MCF 10A (cell line): ENCODE measurements at regions of chr14 and their contacts with region 1.

Region 1: GRCh38 chr14:21455911-21456667 is at the start of gene CHD8:
- DNase-seq: peak; percentile 100
- H3K4me3 Mint-ChIP-seq: peak within 1 kb of the TSS; percentile 92
- H3K27ac Mint-ChIP-seq: peak within 1 kb of the TSS; percentile 98
- H3K4me1 Mint-ChIP-seq: peaks cover 16% of the 10 kb centered on the region
- H3K27me3 Mint-ChIP-seq: no peaks in the 10 kb centered on the region
- CTCF ChIP-seq: peak; percentile 40
- total RNA-seq, gene CHD8: 70.7 and 78.1 TPM in 2 replicates

Region 2: GRCh38 chr14:21233457-21234076 is 222.5 kb before region 1 on chr14:
- CTCF ChIA-PET with region 1: interaction called, 3 read pairs
- POLR2A ChIA-PET with region 1: no interaction called
- intact Hi-C with region 1: loop called (anchors 10 kb)
- DNase-seq: peak; percentile 43
- H3K4me3 Mint-ChIP-seq: no peak overlapping the region
- H3K27ac Mint-ChIP-seq: no peak overlapping the region
- H3K4me1 Mint-ChIP-seq: peaks cover 36% of the 10 kb centered on the region
- H3K27me3 Mint-ChIP-seq: no peaks in the 10 kb centered on the region
- CTCF ChIP-seq: no peak

Region 3: DNA sequence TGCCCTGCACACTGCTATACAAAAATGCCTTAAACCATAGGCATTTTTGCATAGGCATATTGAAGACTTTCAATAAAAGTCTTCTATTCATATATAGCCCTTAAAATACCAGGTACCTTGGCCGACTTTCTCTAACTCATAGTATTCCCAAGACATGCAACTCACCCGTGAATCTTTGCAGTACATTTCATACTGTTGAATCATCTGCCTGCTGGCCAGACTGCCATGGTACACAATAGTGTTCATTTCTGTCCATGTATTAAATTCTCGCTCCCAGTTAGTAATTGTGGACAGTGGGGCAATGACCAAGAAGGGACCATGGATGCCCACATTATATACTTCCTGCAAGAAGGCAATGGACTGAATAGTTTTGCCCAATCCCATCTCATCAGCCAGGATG is 47.9 kb before region 1 on chr14:
- CTCF ChIA-PET with region 1: interaction called, 5 read pairs
- POLR2A ChIA-PET with region 1: interaction called, 5 read pairs
- intact Hi-C with region 1: loop called (anchors 1 kb)
- DNase-seq: peak; percentile 62
- H3K4me3 Mint-ChIP-seq: no peak overlapping the region
- H3K27ac Mint-ChIP-seq: no peak overlapping the region
- H3K4me1 Mint-ChIP-seq: peaks cover 12% of the 10 kb centered on the region
- H3K27me3 Mint-ChIP-seq: no peaks in the 10 kb centered on the region
- CTCF ChIP-seq: no peak

Region 4: GRCh38 chr14:21437063-21437901 is 18.8 kb before region 1 on chr14:
- CTCF ChIA-PET with region 1: interaction called, 60 read pairs
- POLR2A ChIA-PET with region 1: interaction called, 138 read pairs
- intact Hi-C with region 1: loop called (anchors 2 kb)
- DNase-seq: peak; percentile 99
- H3K4me3 Mint-ChIP-seq: peak overlapping the region; percentile 83
- H3K27ac Mint-ChIP-seq: peak overlapping the region; percentile 93
- H3K4me1 Mint-ChIP-seq: peaks cover 26% of the 10 kb centered on the region
- H3K27me3 Mint-ChIP-seq: no peaks in the 10 kb centered on the region
- CTCF ChIP-seq: no peak

Region 5: DNA sequence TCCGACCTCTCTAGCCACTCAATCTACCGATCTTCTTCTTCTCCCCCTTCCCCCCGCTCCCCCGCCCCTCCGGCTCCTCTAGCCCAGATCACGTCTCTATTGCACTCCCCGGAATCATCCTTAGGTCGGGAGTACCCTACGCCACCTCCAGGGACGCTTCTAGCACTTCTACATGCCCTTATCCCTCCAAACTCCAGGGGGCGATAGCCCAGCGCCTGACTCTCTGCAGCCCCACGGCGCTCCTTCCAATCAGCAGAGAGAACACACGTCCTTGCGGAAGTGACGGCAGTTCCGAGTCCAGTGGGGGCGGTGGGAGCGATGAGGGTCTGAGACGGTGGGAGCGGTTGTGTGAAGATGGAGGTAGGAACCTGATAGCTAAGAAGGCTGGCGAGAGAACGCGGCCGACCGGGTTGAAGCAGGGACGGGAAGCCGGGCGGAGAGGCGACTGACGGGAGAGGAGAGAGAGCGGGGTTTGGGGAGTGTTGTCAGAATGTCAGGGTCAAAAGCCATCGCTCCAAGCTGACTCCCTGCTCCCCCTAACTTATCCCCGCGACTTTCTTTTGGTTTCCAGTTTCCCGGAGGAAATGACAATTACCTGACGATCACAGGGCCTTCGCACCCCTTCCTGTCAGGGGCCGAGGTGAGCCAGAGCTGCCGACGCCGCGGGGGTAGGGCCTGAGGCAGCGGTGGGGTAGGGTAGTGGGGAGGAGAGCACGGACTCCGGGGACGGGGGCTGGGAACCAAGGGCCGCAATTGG is 21.0 kb after region 1 on chr14 and contains the starts of genes RAB2B and TOX4:
- CTCF ChIA-PET with region 1: interaction called, 46 read pairs
- POLR2A ChIA-PET with region 1: interaction called, 73 read pairs
- intact Hi-C with region 1: loop called (anchors 1 kb)
- DNase-seq: peak; percentile 99
- H3K4me3 Mint-ChIP-seq: peak within 1 kb of the TSS; percentile 87
- H3K27ac Mint-ChIP-seq: peak within 1 kb of the TSS; percentile 98
- H3K4me1 Mint-ChIP-seq: no peaks in the 10 kb centered on the region
- H3K27me3 Mint-ChIP-seq: no peaks in the 10 kb centered on the region
- CTCF ChIP-seq: peak; percentile 90
- total RNA-seq, gene RAB2B: 22.8 and 23.3 TPM in 2 replicates
- total RNA-seq, gene TOX4: 84.1 and 105 TPM in 2 replicates

Region 6: GRCh38 chr14:21557084-21557901 is 101.2 kb after region 1 on chr14:
- CTCF ChIA-PET with region 1: interaction called, 20 read pairs
- POLR2A ChIA-PET with region 1: no interaction called
- intact Hi-C with region 1: loop called (anchors 1 kb)
- DNase-seq: peak; percentile 84
- H3K4me3 Mint-ChIP-seq: peak overlapping the region; percentile 45
- H3K27ac Mint-ChIP-seq: no peak overlapping the region
- H3K4me1 Mint-ChIP-seq: peaks cover 7% of the 10 kb centered on the region
- H3K27me3 Mint-ChIP-seq: no peaks in the 10 kb centered on the region
- CTCF ChIP-seq: peak; percentile 70

Region 7: DNA sequence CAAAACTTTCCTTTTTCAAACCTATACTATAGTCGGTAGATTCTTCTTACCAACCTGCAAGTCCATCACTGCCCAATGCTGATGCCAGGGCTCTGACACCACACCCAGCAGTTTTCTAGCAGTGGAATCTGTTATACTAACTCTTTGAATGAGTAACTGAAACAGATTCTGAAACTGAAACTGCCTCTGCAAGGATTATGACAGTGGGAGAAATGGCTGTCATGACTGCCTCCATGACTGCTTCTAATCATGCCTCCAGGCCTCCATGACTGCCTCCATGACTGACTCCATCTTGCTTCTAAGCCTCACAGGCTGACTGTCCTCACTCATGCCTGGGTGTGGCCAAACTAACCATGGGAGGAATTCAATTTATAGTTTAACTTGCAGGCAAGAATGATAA is 1281.0 kb after region 1 on chr14:
- CTCF ChIA-PET with region 1: no interaction called
- POLR2A ChIA-PET with region 1: no interaction called
- intact Hi-C with region 1: no loop called
- DNase-seq: no peak
- H3K4me3 Mint-ChIP-seq: no peak overlapping the region
- H3K27ac Mint-ChIP-seq: no peak overlapping the region
- H3K4me1 Mint-ChIP-seq: no peaks in the 10 kb centered on the region
- H3K27me3 Mint-ChIP-seq: peaks cover 5% of the 10 kb centered on the region
- CTCF ChIP-seq: no peak